Gastrocnemius medialis (tissue), 4 donors: ENCODE measurements at regions of chr5 and their contacts with region 1.

Region 1: DNA sequence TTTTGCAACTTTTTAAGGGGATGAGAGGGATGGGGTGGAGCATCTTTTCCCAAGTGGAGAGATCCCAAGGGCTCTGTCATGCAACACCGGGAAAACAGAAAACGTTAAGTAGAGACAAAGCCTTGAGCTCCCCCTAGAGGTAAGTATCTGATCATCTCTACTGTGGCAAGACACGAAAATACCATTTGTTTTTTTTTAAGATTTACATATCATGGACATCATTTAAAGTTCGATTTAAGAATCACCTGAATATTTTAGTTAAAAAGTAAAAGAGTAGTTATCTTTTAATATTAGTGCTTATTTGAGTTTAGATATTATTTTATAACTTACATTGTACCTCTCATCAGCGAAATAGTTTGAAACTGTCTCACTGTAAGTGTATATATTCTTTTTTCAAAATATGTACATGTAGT is 200.4 kb downstream of the LRRC70 start:
- DNase-seq: no peak
- ATAC-seq: peak; percentile 58 to 68
- H3K4me3 ChIP-seq: no peak overlapping the region
- H3K27ac ChIP-seq: no peak overlapping the region
- H3K4me1 ChIP-seq: no peaks in the 10 kb centered on the region
- H3K27me3 ChIP-seq: no peaks in the 10 kb centered on the region
- CTCF ChIP-seq: peak in 2 of 5 experiments; percentile 53 to 60
- POLR2A ChIP-seq: no peak

Region 2: DNA sequence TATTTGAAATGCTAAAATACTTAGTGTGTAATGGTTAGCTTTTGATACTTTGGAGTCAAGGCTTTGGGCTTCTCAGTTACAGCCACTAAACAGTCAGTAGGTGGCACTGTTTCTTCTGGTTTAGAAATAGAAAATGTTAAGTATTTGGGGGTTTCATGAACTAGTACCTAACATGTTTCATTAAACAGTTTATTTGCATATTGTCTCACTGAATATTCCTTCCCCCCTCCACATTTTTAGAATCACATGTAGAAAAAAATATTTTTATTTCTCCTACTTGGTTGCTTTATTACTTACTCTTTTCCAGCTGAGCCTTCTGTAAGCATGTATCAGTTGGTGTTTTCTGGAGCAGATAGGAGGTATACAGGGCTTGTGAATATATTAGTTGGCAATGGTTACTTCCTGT is 318.4 kb before region 1 on chr5:
- in situ Hi-C with region 1: loop called (anchors 5 to 25 kb)
- intact Hi-C with region 1: loop called (anchors 5 kb)
- DNase-seq: no peak
- ATAC-seq: no peak
- H3K4me3 ChIP-seq: no peak overlapping the region
- H3K27ac ChIP-seq: no peak overlapping the region
- H3K4me1 ChIP-seq: no peaks in the 10 kb centered on the region
- H3K27me3 ChIP-seq: no peaks in the 10 kb centered on the region
- CTCF ChIP-seq: peak in 4 of 5 experiments; percentile 27 to 70 (median 53)
- POLR2A ChIP-seq: no peak